ENCODE measurements at regions of chr1 and their contacts with region 1.

Region 1: DNA sequence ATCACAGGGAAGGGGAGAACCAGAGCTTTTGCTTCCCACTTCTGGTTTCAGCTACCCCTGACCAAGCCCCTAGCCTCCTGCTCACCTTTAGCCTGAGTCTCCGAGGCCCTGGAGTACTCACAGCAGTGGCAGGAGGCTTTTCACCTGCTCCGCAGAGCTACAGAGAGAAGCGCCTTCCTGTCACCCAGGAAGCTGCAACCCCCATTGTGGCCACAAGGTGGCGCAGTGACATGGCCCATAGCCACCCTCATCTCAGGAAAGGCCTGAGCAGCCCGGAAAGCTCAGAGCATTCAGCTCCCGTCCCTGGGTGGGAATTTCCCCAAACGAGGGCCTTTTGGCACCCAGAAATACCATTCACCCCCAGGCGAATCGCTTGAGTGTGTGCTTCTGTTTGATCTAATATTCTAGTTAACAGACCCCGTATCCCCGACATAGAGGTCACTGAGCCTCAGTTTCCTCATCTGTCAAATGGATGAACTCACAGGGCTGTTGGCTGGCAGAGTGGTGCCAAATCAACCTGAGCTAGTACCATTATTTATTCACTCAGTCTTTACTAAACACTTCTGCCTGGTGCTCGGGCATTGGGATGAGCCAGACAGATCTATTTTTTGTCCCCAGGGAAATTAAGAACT is 25.3 kb downstream of the A3GALT2 start:
- DNase-seq: peak; percentile 95
- H3K4me3 Mint-ChIP-seq: no peak overlapping the region
- H3K27ac Mint-ChIP-seq: no peak overlapping the region
- H3K4me1 Mint-ChIP-seq: peaks cover 5% of the 10 kb centered on the region
- H3K27me3 Mint-ChIP-seq: no peaks in the 10 kb centered on the region

Region 2: DNA sequence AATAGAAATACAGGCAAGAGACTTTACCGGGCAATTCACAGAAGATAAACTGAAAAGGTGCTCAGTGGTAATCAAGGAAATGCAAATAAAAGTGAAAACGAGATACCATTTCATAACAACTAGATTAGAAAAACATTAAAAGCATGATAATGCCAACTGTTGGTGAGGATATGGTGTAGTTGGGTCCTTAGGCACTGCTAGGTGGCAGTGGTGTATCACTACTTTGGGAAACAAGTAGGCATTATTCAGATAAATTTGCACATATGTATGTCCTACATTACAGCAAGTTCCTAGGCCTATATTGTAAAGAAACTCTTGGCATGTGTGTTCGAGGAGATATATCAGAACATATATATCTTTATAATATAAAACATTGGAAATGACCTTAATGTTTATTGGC is 183.6 kb before region 1 on chr1:
- CTCF ChIA-PET with region 1: interaction called, 4 read pairs
- intact Hi-C with region 1: loop called (anchors 1 kb)
- DNase-seq: no peak
- H3K4me3 Mint-ChIP-seq: no peak overlapping the region
- H3K27ac Mint-ChIP-seq: no peak overlapping the region
- H3K4me1 Mint-ChIP-seq: no peaks in the 10 kb centered on the region
- H3K27me3 Mint-ChIP-seq: no peaks in the 10 kb centered on the region

Region 3: GRCh38 chr1:33281596-33282303 is 13.8 kb before region 1 on chr1:
- CTCF ChIA-PET with region 1: interaction called, 10 read pairs
- intact Hi-C with region 1: no loop called
- DNase-seq: no peak
- H3K4me3 Mint-ChIP-seq: no peak overlapping the region
- H3K27ac Mint-ChIP-seq: no peak overlapping the region
- H3K4me1 Mint-ChIP-seq: no peaks in the 10 kb centered on the region
- H3K27me3 Mint-ChIP-seq: no peaks in the 10 kb centered on the region

Region 4: GRCh38 chr1:33349778-33350610 is 54.4 kb after region 1 on chr1:
- CTCF ChIA-PET with region 1: interaction called, 8 read pairs
- intact Hi-C with region 1: loop called (anchors 5 kb)
- DNase-seq: peak; percentile 76
- H3K4me3 Mint-ChIP-seq: peak overlapping the region; percentile 89
- H3K27ac Mint-ChIP-seq: peak overlapping the region; percentile 84
- H3K4me1 Mint-ChIP-seq: peaks cover 45% of the 10 kb centered on the region
- H3K27me3 Mint-ChIP-seq: no peaks in the 10 kb centered on the region

Region 5: DNA sequence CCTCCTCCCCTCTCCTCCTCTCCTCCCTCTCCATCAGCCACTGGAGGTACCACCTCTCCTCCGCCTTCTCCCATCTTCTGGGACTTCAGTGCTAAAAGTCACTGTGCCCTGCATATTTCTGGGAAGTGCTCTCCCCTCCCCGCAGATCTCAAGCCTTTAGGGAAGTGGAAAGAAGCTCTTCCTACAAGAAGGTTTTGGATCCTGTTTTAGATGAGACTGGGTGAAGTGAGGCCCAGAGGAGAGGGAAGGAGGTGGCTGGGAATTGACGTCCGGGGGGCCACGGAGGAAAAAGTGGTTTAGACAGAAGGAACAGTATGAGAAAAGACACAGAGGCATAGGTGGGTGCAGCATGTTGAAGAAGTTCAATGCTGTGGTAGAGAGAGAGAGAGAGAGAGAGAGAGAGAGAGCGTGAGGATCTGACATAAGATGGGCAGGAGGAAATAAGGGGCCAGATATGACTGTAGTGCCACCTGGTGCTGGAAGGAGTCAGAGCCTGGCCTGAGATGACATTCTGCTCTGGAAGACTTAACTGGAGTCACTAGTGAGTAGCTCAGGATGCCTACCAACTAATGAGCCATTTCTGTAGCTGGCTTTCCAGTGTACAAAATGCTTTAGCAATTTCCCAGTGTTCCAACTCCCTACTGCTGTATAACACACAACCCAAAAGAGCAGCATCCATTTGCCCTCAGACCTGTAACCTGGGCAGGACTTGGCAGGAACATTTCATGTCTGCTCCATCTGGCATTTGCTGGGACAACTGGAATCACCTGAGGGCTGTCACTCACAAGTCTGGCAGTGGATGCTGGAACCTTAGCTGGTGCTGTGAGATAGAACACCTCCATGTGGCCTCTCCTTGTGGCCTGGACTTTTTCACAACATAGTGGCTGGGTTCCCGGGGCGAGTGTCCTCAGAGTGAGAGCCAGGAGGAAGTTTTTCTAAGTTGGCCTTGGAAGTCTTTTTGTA is 160.3 kb after region 1 on chr1:
- CTCF ChIA-PET with region 1: interaction called, 5 read pairs
- intact Hi-C with region 1: loop called (anchors 1 kb)
- DNase-seq: peak; percentile 69
- H3K4me3 Mint-ChIP-seq: no peak overlapping the region
- H3K27ac Mint-ChIP-seq: no peak overlapping the region
- H3K4me1 Mint-ChIP-seq: peaks cover 3% of the 10 kb centered on the region
- H3K27me3 Mint-ChIP-seq: no peaks in the 10 kb centered on the region

Region 6: DNA sequence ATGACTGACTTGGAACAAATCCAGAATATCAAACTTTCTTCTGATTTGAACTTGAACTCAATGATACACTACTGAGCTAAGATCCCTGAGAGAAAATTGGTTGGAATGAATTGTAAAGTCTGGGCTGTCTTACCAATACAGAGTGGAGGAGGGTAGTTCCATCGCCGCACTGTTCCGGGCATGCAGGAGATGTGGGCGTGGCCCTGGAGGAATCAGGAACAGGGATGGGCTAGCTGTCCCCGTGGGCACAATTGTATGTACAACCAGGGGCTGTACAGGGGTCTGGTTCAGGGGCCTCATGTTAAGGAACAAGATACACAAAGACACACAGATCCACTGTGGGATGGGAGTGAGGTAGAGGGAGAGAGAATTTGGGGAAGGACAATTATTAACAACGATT is 321.2 kb after region 1 on chr1:
- CTCF ChIA-PET with region 1: interaction called, 8 read pairs
- intact Hi-C with region 1: loop called (anchors 1 kb)
- DNase-seq: no peak
- H3K4me3 Mint-ChIP-seq: no peak overlapping the region
- H3K27ac Mint-ChIP-seq: no peak overlapping the region
- H3K4me1 Mint-ChIP-seq: peaks cover 2% of the 10 kb centered on the region
- H3K27me3 Mint-ChIP-seq: peaks cover 27% of the 10 kb centered on the region

Measured in activated naive CD4-positive, alpha-beta T cell treated with anti-CD3 and anti-CD28 coated beads for 36 hours (primary cell).